OCI-LY7 (cell line): ENCODE measurements at regions of chr18 and their contacts with region 1.

Region 1: DNA sequence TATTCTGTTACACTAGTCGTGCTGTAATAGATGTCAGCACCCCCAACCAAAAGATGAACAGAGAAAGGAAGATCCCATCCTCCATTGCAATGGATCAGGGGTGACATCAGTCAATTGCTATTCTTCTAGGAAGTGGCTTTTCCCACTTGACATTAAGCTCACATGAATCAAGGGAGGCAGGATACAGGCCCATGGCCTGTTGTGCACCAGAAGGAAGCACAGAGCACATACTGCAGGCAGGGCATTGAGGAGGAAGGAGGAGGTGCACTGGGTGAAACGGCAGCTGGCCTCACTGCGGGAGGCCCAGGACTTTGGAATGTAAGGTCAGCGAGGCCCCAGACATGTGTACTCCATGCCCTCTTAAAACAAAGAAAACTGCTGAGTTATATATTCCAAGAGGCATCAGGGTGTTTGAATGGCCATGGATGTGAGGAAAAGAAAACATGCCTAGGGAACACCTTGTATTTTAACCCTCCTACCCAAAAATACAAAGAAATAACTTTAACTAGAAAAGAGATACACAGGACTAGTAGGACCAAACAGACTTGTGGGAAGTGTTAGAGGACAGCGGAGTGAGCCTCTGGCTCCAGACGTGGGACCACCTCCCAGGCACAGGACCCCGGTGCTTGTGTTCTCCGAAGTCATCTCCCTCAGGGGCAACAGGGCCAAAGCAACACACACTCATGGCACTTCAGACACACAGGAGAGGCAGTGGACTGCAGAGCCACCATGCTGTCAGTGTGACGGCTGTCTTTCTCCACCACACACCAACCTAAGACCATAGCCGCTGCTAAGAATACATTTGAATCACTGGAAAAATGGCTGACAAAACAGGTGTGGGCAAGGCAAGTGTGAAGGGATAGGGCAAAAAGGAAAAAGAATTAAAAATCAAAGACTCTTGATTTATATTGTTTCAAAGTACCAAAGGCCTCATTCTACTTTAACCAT is 51.4 kb upstream of the RIOK3 start:
- DNase-seq: no peak
- H3K4me3 ChIP-seq: no peak overlapping the region
- H3K27ac ChIP-seq: no peak overlapping the region
- H3K4me1 ChIP-seq: no peaks in the 10 kb centered on the region
- CTCF ChIP-seq: no peak

Region 2: GRCh38 chr18:22434973-22435608 is 966.6 kb before region 1 on chr18:
- CTCF ChIA-PET with region 1: no interaction called
- POLR2A ChIA-PET with region 1: no interaction called
- intact Hi-C with region 1: no loop called
- DNase-seq: no peak
- H3K4me3 ChIP-seq: no peak overlapping the region
- H3K27ac ChIP-seq: no peak overlapping the region
- H3K4me1 ChIP-seq: no peaks in the 10 kb centered on the region
- CTCF ChIP-seq: no peak

Region 3: GRCh38 chr18:22683196-22683676 is 718.4 kb before region 1 on chr18:
- CTCF ChIA-PET with region 1: no interaction called
- POLR2A ChIA-PET with region 1: no interaction called
- intact Hi-C with region 1: no loop called
- DNase-seq: no peak
- H3K4me3 ChIP-seq: no peak overlapping the region
- H3K27ac ChIP-seq: no peak overlapping the region
- H3K4me1 ChIP-seq: no peaks in the 10 kb centered on the region
- CTCF ChIP-seq: no peak

Region 4: DNA sequence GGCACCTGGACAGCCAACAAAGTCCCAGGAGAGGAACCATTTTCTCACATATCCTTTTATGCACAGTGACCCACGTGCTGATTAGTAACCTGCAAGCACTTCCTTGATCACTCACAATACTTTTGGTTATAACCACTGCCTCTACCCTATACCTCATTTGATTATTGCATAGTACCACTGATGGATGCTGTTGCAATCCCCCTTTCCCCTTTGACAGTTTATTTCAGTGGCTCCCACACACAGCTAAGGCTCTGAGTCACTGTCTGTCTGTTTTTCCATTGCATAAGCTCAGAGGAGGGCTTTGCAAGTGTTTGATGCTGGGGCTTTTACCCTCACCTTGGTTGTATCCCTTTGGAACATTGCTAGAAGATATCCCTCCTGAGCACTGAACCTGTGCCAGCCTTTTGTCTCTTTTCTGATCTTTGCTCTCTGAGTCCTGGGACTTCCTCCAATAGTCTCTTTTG is 570.2 kb before region 1 on chr18:
- CTCF ChIA-PET with region 1: no interaction called
- POLR2A ChIA-PET with region 1: no interaction called
- intact Hi-C with region 1: loop called (anchors 10 kb)
- DNase-seq: peak; percentile 10
- H3K4me3 ChIP-seq: no peak overlapping the region
- H3K27ac ChIP-seq: no peak overlapping the region
- H3K4me1 ChIP-seq: peaks cover 4% of the 10 kb centered on the region
- CTCF ChIP-seq: no peak

Region 5: DNA sequence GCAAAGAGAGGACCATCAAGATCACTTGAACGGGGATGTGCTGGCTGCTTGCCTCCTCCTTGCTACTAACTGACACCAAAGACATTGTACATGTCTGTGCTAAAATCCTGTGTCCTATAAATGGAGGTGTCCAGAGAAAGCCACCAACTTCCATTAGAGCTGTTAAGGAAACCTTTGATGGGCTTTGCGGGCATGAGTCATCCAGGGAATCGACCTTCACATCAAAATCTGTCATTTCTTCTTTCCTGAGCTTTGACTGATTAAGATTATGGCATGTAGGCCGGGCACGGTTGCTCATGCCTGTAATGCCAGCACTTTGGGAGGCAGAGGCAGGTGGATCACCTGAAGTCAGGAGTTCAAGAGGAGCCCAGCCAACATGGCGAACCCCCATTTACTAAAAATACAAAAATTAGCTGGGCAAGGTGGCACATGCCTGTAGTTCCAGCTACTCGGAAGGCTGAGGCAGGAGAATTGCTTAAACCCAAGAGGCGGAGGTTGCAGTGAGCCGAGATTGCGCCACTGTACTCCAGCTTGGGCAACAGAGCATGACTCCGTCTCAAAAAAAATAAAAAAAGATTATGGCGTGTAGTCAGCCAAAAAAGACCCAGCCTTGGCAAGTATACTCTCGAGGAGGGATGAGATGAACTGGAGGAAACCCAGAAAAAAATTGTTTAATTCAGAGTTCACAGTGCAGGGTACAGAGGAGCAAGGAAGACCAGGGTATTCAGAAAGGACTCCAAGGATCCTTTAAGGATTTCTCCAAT is 150.6 kb before region 1 on chr18:
- CTCF ChIA-PET with region 1: no interaction called
- POLR2A ChIA-PET with region 1: no interaction called
- intact Hi-C with region 1: no loop called
- DNase-seq: no peak
- H3K4me3 ChIP-seq: no peak overlapping the region
- H3K27ac ChIP-seq: no peak overlapping the region
- H3K4me1 ChIP-seq: no peaks in the 10 kb centered on the region
- CTCF ChIP-seq: no peak

Region 6: GRCh38 chr18:23458830-23459529 is 57.3 kb after region 1 on chr18:
- CTCF ChIA-PET with region 1: no interaction called
- POLR2A ChIA-PET with region 1: no interaction called
- intact Hi-C with region 1: no loop called
- DNase-seq: no peak
- H3K4me3 ChIP-seq: no peak overlapping the region
- H3K27ac ChIP-seq: no peak overlapping the region
- H3K4me1 ChIP-seq: peaks cover 8% of the 10 kb centered on the region
- CTCF ChIP-seq: no peak